ENCODE measurements at regions of chrX and their contacts with region 1.

Region 1: DNA sequence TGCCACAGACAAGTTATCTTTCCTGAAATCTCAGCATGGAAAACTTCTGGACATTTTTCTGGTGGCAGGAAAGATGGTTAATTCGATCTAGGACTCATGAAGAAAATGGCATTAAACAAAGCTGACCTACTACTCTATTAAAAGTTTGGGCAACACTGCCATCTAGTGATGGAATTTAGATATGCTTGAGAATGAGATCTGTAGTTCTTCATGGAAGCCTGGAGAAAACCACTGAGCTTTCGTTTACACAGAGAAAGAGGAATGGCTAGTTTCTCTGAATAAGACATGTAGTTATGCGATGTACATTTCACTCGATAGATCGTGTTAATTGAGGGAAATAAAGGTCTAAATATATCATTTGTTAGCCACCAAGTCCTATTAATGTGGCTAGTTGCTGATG is 51.7 kb upstream of the CHRDL1 start:
- DNase-seq: peak in 2 of 4 donors; percentile 51 to 64
- ATAC-seq: peak; percentile 90
- H3K4me3 ChIP-seq: no peak overlapping the region
- H3K27ac ChIP-seq: no peak overlapping the region
- H3K4me1 ChIP-seq: no peaks in the 10 kb centered on the region
- H3K27me3 ChIP-seq: peaks cover 0 to 6% of the 10 kb centered on the region in 2 donors
- CTCF ChIP-seq: peak; percentile 45 to 67

Region 2: DNA sequence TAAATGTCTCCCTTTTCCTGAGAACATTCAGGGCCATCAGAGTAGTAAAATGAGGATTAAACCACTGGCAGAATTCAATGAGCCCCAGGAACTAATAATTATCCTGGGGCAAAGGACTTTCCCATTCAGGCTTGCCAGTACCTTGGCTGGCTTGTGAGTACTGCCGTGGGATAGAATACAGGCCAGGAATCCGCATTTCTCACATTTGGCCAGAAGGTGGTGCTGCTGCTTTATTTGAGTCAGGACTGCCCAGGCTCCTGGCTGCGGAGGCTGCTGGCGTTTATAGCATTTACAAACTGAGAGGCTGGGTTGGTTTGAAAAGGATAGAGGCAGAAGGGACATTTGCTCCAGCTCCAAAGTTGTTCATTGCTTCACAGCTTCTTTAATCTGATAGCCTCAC is 397.3 kb before region 1 on chrX:
- intact Hi-C with region 1: loop called in 1 of 2 experiments (anchors 5 kb)
- DNase-seq: peak in 3 of 4 donors; percentile 61 to 80 (median 70)
- ATAC-seq: peak; percentile 97
- H3K4me3 ChIP-seq: no peak overlapping the region
- H3K27ac ChIP-seq: no peak overlapping the region
- H3K4me1 ChIP-seq: no peaks in the 10 kb centered on the region
- H3K27me3 ChIP-seq: no peaks in the 10 kb centered on the region
- CTCF ChIP-seq: peak; percentile 64 to 71